ENCODE measurements at regions of chr1 and their contacts with region 1.

Region 1: GRCh38 chr1:21294266-21294989 is 4.2 kb upstream of the ECE1 start:
- DNase-seq: peak; percentile 97
- ATAC-seq: peak; percentile 71
- H3K4me3 ChIP-seq: peak overlapping the region; percentile 48 to 75 (median 61)
- H3K4me3 Mint-ChIP-seq: peak overlapping the region; percentile 87
- H3K27ac ChIP-seq: peak overlapping the region; percentile 96 to 99
- H3K27ac Mint-ChIP-seq: peak overlapping the region; percentile 95
- H3K4me1 ChIP-seq: peaks cover 77 to 90% of the 10 kb centered on the region in 2 donors
- H3K4me1 Mint-ChIP-seq: peaks cover 85% of the 10 kb centered on the region
- H3K27me3 ChIP-seq: no peaks in the 10 kb centered on the region
- H3K27me3 Mint-ChIP-seq: no peaks in the 10 kb centered on the region
- CTCF ChIP-seq: no peak

Region 2: DNA sequence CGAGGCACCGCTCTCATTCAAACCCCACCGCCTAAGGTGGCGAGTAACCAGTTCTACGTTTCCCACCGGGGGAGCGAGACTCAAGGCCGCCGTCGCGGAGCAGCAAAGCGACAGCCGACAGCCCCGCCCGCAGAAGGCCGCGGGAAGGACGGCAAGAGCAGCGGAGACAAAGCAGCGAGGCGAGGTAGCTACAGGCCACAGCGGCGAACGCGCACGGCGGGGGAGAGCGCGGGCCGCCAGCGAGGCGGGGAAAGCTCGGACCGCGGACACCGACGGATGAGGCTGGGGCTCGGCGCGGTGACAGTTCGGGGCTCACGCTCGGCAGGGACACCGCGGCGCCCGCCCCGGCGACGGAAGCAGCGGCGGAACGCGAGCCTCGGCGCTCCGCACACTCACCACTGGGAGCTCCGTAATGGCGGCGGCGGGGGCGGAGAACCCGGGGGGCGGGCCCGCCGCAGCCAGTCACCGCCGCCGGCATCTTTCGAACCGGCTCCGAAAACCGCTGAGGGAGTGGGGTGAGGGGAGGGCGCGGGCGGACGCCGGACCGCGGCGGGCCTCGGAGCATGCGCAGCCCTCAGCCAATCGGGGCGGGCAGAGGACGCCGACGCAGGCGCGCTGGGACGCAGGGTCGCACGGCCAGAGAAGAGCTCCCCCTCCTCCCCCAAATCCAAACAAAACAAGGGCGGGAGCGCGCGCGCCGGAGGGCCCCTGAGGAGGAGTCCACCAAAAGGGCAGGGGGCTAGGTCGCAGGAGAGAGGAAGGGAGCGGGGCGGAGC is 508.0 kb before region 1 on chr1:
- CTCF ChIA-PET with region 1: no interaction called
- POLR2A ChIA-PET with region 1: no interaction called
- intact Hi-C with region 1: loop called (anchors 5 kb)
- DNase-seq: peak; percentile 98
- ATAC-seq: peak; percentile 72
- H3K4me3 ChIP-seq: peak overlapping the region; percentile 78 to 92 (median 82)
- H3K4me3 Mint-ChIP-seq: peak overlapping the region; percentile 99
- H3K27ac ChIP-seq: peak overlapping the region; percentile 81 to 91
- H3K27ac Mint-ChIP-seq: peak overlapping the region; percentile 98
- H3K4me1 ChIP-seq: peaks cover 19 to 33% of the 10 kb centered on the region in 2 donors
- H3K4me1 Mint-ChIP-seq: peaks cover 39% of the 10 kb centered on the region
- H3K27me3 ChIP-seq: no peaks in the 10 kb centered on the region
- H3K27me3 Mint-ChIP-seq: no peaks in the 10 kb centered on the region
- CTCF ChIP-seq: no peak

Region 3: DNA sequence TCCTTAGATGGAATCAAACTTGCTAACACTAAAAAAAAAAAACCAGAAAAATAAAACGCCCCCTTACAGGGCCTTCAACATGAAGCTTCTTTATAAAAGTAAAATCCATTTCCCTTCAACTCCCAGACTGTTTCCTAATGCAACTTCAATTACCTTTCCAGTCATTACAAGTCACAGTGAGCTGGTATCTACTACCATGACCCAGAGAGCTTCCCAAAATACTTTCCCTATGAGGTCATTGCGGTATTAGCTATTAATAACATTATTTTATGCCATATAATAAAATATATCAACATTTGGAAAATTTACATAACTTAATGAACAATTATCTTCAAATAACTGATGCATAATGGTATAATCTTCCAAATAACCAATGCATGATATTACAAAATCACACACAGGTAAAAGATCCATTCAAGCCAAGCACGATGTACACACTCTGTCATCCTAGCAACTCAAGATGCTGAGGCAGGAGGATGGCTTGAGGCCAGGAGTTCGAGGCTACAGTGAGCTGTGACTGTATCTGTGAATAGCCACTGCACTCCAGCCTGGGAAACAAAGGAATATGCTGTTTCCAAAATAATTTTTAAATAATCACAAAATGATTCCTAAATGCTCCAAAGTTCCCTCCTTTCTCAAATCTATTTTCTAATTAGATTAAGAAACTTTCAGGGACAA is 141.9 kb before region 1 on chr1:
- CTCF ChIA-PET with region 1: no interaction called
- POLR2A ChIA-PET with region 1: no interaction called
- intact Hi-C with region 1: no loop called
- DNase-seq: no peak
- ATAC-seq: no peak
- H3K4me3 ChIP-seq: no peak overlapping the region
- H3K4me3 Mint-ChIP-seq: no peak overlapping the region
- H3K27ac ChIP-seq: no peak overlapping the region
- H3K27ac Mint-ChIP-seq: no peak overlapping the region
- H3K4me1 ChIP-seq: no peaks in the 10 kb centered on the region
- H3K4me1 Mint-ChIP-seq: peaks cover 23% of the 10 kb centered on the region
- H3K27me3 ChIP-seq: no peaks in the 10 kb centered on the region
- H3K27me3 Mint-ChIP-seq: no peaks in the 10 kb centered on the region
- CTCF ChIP-seq: no peak

Region 4: GRCh38 chr1:21270086-21270689 is 24.2 kb before region 1 on chr1:
- CTCF ChIA-PET with region 1: interaction called, 62 read pairs
- POLR2A ChIA-PET with region 1: interaction called, 17 read pairs
- intact Hi-C with region 1: loop called (anchors 1 kb)
- DNase-seq: peak; percentile 85
- ATAC-seq: peak; percentile 92
- H3K4me3 ChIP-seq: no peak overlapping the region
- H3K4me3 Mint-ChIP-seq: no peak overlapping the region
- H3K27ac ChIP-seq: no peak overlapping the region
- H3K27ac Mint-ChIP-seq: peak overlapping the region; percentile 51
- H3K4me1 ChIP-seq: peaks cover 0 to 7% of the 10 kb centered on the region in 2 donors
- H3K4me1 Mint-ChIP-seq: peaks cover 10% of the 10 kb centered on the region
- H3K27me3 ChIP-seq: no peaks in the 10 kb centered on the region
- H3K27me3 Mint-ChIP-seq: no peaks in the 10 kb centered on the region
- CTCF ChIP-seq: peak; percentile 97

Region 5: DNA sequence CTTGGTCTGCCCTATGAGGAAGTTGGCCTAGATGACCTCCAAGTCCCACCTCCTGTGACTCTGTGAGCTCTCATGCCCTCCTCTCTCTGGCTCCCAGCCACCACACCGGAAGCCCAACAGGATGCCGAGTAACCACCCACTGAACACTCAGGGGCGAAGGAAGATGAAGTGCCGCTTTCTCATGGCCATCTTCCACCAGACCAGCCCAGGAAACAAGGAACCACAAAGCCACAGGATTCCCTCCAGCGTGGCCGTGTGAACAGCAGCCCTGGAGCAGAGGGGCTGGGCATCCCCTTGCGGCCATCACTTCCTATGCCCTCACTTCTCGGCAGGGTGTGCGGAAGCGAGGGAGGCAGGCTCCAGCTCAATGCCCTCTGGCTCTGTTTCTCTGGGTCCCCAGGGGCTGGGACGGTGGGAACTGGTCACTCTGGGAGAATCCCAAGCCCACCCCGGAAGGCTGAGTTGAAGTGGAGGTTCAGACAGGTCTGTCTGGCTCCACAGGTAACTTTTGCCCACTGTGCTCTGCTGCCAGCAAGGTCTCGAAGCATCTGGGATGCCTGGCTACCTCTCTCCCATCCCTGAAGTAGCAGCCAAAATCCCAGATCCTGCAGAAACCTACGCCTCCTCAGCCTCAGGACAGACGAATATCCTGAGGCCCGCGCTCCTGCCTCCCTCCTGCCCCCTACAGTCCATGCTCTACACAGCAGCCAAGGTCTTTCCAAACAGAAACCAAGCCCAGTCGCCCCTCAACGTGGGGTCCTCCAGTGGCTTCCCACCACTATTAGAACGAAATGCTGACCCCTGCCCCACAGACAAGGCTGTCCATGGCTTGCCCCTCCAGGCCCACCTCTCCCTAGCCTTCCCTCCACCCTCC is 40.0 kb after region 1 on chr1:
- CTCF ChIA-PET with region 1: interaction called, 72 read pairs
- POLR2A ChIA-PET with region 1: interaction called, 19 read pairs
- intact Hi-C with region 1: loop called (anchors 1 kb)
- DNase-seq: peak; percentile 93
- ATAC-seq: peak; percentile 86
- H3K4me3 ChIP-seq: peak overlapping the region in 4 of 5 experiments; percentile 49 to 69 (median 56)
- H3K4me3 Mint-ChIP-seq: peak overlapping the region; percentile 87
- H3K27ac ChIP-seq: peak overlapping the region; percentile 90 to 95
- H3K27ac Mint-ChIP-seq: peak overlapping the region; percentile 98
- H3K4me1 ChIP-seq: peaks cover 54 to 73% of the 10 kb centered on the region in 2 donors
- H3K4me1 Mint-ChIP-seq: peaks cover 83% of the 10 kb centered on the region
- H3K27me3 ChIP-seq: no peaks in the 10 kb centered on the region
- H3K27me3 Mint-ChIP-seq: no peaks in the 10 kb centered on the region
- CTCF ChIP-seq: peak; percentile 72

Region 6: GRCh38 chr1:21361506-21361905 is 67.1 kb after region 1 on chr1:
- CTCF ChIA-PET with region 1: interaction called, 30 read pairs
- POLR2A ChIA-PET with region 1: no interaction called
- intact Hi-C with region 1: loop called (anchors 1 kb)
- DNase-seq: no peak
- ATAC-seq: no peak
- H3K4me3 ChIP-seq: no peak overlapping the region
- H3K4me3 Mint-ChIP-seq: no peak overlapping the region
- H3K27ac ChIP-seq: no peak overlapping the region
- H3K27ac Mint-ChIP-seq: no peak overlapping the region
- H3K4me1 ChIP-seq: peaks cover 10 to 14% of the 10 kb centered on the region in 2 donors
- H3K4me1 Mint-ChIP-seq: peaks cover 16% of the 10 kb centered on the region
- H3K27me3 ChIP-seq: no peaks in the 10 kb centered on the region
- H3K27me3 Mint-ChIP-seq: no peaks in the 10 kb centered on the region
- CTCF ChIP-seq: no peak